PC-3 (cell line): ENCODE measurements at regions of chr11 and their contacts with region 1.

Region 1: DNA sequence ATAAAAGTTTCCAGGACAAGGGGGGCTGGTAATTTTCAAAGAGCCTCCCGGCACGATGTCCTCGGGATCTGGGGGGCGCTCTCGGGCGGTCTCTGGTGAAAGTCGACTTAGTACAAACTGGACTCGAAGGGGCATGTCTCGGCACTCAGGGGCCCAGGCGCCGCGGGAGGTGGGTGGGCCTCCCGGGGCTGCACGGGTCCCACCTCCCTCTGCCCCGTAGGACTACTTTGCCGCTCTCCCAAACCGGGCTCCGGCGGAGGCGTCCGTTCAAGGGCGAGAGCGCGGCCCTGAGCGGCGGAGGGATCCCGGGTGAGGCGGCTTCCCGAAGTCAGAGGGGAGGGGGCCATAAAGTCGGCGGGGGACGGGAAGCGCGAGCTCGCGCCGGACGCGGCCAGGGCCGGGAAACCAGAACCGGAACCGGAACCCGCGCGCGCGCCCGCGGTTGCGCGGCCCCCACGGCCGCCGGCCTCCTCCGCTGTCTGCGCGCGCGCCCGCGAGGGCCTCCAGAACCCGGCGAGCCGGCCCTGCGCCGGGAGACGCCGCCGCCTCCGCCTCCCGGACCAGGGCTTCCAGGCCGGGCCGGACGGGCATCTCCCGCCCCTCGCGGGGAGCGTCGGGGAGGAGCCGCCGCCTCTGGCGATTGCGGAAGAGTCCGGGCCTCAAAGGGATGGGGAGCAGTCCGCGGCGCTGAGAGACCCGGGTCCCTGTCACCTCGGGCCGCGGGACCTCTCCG is at the start of gene ARHGEF12:
- DNase-seq: peak; percentile 97
- ATAC-seq: peak; percentile 54
- H3K4me3 ChIP-seq: peak within 1 kb of the TSS; percentile 85
- H3K27ac ChIP-seq: peak within 1 kb of the TSS; percentile 38
- H3K4me1 ChIP-seq: peaks cover 60% of the 10 kb centered on the region
- H3K27me3 ChIP-seq: no peaks in the 10 kb centered on the region
- CTCF ChIP-seq: peak; percentile 83
- total RNA-seq, gene ARHGEF12: 41.0 and 54.4 TPM in 2 replicates

Region 2: DNA sequence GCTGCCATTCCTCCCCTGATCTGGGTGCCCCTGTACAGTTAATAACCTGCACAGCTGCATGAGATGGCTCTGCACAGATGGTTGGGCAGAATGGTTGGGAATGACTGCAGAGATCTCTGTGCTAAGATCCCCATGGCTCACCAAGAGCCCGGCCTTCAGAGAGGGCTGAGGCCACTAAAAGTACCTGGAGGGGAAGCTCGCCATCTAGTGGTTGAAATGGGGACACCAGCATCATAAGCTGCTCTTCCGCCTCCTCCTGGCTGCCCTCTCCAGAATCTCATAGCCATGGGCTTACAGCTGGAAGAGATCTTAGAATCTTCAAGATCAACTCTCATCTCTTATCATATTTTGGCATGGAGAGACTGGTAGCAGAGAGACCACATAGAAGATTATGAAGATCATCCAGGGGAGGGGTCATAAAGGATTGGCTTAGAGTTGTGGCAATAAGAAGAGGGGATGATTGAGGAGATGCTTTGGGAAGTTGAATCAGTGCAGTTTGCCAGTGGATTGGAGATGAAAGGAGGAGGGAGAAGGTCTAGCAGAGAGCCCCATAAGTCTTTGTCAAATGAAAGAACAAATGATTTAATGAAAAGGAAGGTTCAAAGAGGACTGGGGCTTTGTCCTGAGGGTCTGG is 33.0 kb before region 1 on chr11:
- CTCF ChIA-PET with region 1: interaction called, 4 read pairs
- POLR2A ChIA-PET with region 1: interaction called, 3 read pairs
- intact Hi-C with region 1: loop called (anchors 2 kb)
- DNase-seq: peak; percentile 93
- ATAC-seq: peak; percentile 23
- H3K4me3 ChIP-seq: no peak overlapping the region
- H3K27ac ChIP-seq: no peak overlapping the region
- H3K4me1 ChIP-seq: peaks cover 66% of the 10 kb centered on the region
- H3K27me3 ChIP-seq: no peaks in the 10 kb centered on the region
- CTCF ChIP-seq: peak; percentile 100

Region 3: DNA sequence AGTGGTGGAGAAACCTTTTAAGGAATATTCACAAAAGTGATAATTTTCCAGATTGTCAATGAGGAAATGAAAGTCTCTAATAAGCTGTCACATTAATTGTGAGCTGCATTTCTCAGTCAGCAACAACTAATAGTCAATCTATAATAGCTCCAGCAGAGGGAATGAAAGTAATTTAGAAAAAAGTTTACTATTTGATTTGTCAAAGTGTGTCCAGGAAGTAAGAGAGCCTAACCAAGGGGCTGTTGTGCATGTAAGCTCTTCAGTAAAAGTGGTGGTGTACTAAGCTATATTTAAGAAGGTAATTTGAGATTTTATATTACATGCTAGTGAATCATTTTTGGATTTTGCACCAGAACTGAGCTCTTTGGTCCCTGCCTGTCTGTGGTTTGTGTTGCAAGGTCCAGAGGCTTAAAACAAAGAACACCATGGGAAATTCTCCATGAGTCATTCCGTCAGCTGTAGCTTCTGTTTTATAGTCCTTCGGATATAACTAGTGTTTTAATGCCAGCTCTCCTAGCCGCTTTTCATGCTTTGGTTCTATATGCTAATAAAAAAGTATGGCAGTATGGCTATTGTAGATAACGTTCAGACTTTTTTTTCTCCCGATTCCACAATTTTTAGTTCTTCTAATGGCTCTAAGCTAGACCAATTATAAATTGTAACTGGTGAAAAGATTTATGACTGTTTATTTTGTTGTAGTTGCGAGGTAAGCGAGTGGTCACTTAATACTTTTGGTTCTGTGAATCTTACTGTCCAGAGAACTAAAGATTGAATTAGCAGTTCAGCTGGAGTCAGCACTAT is 64.7 kb after region 1 on chr11:
- CTCF ChIA-PET with region 1: interaction called, 5 read pairs
- POLR2A ChIA-PET with region 1: interaction called, 13 read pairs
- intact Hi-C with region 1: loop called (anchors 1 kb)
- DNase-seq: peak; percentile 97
- ATAC-seq: peak; percentile 94
- H3K4me3 ChIP-seq: peak overlapping the region; percentile 59
- H3K27ac ChIP-seq: peak overlapping the region; percentile 61
- H3K4me1 ChIP-seq: peaks cover 32% of the 10 kb centered on the region
- H3K27me3 ChIP-seq: no peaks in the 10 kb centered on the region
- CTCF ChIP-seq: no peak

Region 4: DNA sequence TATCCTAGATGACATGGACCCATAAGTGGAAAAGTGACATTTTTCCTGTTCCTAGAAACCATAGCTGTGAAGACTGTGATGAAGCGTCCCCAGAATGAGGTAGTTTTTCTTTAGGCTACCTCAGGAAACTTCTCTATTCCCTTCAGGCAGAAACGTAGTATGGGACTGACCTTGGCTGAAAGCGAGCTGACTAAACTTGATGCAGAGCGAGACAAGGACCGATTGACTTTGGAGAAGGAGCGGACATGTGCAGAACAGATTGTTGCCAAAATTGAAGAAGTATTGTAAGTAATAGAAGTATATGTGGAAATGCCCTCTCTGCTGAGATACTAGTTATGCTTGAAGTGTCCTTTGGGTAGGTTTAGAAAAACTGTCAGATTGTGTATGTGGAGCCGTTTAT is 110.7 kb after region 1 on chr11:
- CTCF ChIA-PET with region 1: no interaction called
- POLR2A ChIA-PET with region 1: no interaction called
- intact Hi-C with region 1: no loop called
- DNase-seq: no peak
- ATAC-seq: no peak
- H3K4me3 ChIP-seq: no peak overlapping the region
- H3K27ac ChIP-seq: no peak overlapping the region
- H3K4me1 ChIP-seq: no peaks in the 10 kb centered on the region
- H3K27me3 ChIP-seq: no peaks in the 10 kb centered on the region
- CTCF ChIP-seq: no peak

Region 5: DNA sequence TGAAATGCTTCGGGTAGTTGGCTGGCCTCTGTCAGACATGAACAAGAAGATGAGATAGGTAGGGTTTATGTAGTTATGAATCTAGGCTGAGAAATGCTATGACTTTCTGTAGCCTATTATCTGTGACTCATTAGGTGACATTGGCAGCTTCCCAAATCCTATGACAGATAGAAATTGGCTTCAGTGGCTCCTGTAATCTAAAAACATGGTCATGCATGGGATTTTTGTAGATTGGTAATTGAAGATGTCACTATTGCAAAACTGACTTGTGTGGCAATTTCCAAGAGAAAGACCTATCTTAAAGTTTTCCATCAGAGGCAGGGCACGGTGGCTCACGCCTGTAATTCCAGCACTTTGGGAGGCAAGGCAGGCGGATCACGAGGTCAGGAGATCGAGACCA is 146.1 kb after region 1 on chr11:
- CTCF ChIA-PET with region 1: no interaction called
- POLR2A ChIA-PET with region 1: no interaction called
- intact Hi-C with region 1: loop called (anchors 5 kb)
- DNase-seq: peak; percentile 65
- ATAC-seq: peak; percentile 48; the same call in 1 of the 2 replicates
- H3K4me3 ChIP-seq: no peak overlapping the region
- H3K27ac ChIP-seq: no peak overlapping the region
- H3K4me1 ChIP-seq: no peaks in the 10 kb centered on the region
- H3K27me3 ChIP-seq: no peaks in the 10 kb centered on the region
- CTCF ChIP-seq: no peak

Region 6: GRCh38 chr11:120511116-120511819 is 175.2 kb after region 1 on chr11 and contains the start of gene GRIK4:
- CTCF ChIA-PET with region 1: interaction called, 3 read pairs
- POLR2A ChIA-PET with region 1: no interaction called
- intact Hi-C with region 1: loop called (anchors 2 kb)
- DNase-seq: peak; percentile 80
- ATAC-seq: peak; percentile 90
- H3K4me3 ChIP-seq: peak within 1 kb of the TSS; percentile 51; the same call in 1 of the 2 replicates
- H3K27ac ChIP-seq: no peak within 1 kb of the TSS
- H3K4me1 ChIP-seq: no peaks in the 10 kb centered on the region
- H3K27me3 ChIP-seq: peaks cover 67% of the 10 kb centered on the region
- CTCF ChIP-seq: peak; percentile 95
- total RNA-seq, gene GRIK4: not detected in 2 replicates

Region 7: DNA sequence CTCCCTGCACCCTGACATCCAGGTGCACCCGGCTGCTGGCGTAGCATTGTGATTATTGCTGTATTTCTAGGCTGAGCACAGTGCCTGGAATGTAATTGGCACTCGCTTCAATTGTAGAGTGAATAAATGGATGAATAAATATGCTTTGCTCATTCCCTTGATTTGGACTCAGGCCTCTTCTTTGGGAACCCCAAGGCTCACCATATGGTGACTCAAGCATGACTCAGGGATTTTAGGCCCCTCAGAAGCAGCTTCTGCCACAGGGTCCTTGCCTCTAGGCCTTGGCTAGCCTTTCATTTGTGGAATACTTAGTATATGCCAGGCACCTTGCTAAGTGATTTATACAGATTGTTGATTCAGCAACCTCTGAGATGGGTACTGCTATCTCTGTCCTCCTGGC is 254.4 kb after region 1 on chr11:
- CTCF ChIA-PET with region 1: no interaction called
- POLR2A ChIA-PET with region 1: no interaction called
- intact Hi-C with region 1: no loop called
- DNase-seq: no peak
- ATAC-seq: no peak
- H3K4me3 ChIP-seq: no peak overlapping the region
- H3K27ac ChIP-seq: no peak overlapping the region
- H3K4me1 ChIP-seq: no peaks in the 10 kb centered on the region
- H3K27me3 ChIP-seq: peaks cover 97% of the 10 kb centered on the region
- CTCF ChIP-seq: no peak